HepG2 (cell line): ENCODE measurements at regions of chr1 and their contacts with region 1.

Region 1: GRCh38 chr1:171485375-171486047 is at the start of gene PRRC2C:
- DNase-seq: peak; percentile 95
- ATAC-seq: peak; percentile 97
- H3K4me3 ChIP-seq: peak within 1 kb of the TSS; percentile 80 to 97 (median 96)
- H3K27ac ChIP-seq: peak within 1 kb of the TSS; percentile 96
- H3K4me1 ChIP-seq: peaks cover 36% of the 10 kb centered on the region
- H3K27me3 ChIP-seq: no peaks in the 10 kb centered on the region; a peak in 1 of 5 replicates
- CTCF ChIP-seq: peak; percentile 92
- EP300 ChIP-seq: peak in 1 of 2 experiments; percentile 26; a peak in 1 of 4 replicates
- POLR2A ChIP-seq: peak; percentile 73 to 77
- RAD21 ChIP-seq: peak; percentile 59
- total RNA-seq, gene PRRC2C: 46.2 and 124 TPM in 2 replicates

Region 2: GRCh38 chr1:169893494-169894362 is 1591.8 kb before region 1 on chr1 and contains the start of gene SCYL3:
- CTCF ChIA-PET with region 1: no interaction called
- POLR2A ChIA-PET with region 1: no interaction called
- in situ Hi-C with region 1: no loop called
- intact Hi-C with region 1: loop called (anchors 10 kb)
- DNase-seq: peak; percentile 96
- ATAC-seq: peak; percentile 96
- H3K4me3 ChIP-seq: peak within 1 kb of the TSS; percentile 81 to 90 (median 87)
- H3K27ac ChIP-seq: peak within 1 kb of the TSS; percentile 99
- H3K4me1 ChIP-seq: peaks cover 36% of the 10 kb centered on the region
- H3K27me3 ChIP-seq: peaks cover 0 to 4% of the 10 kb centered on the region in 2 experiments; a peak in 1 of 5 replicates
- CTCF ChIP-seq: no peak; the same call in 1 of the 2 replicates
- EP300 ChIP-seq: 0 out of 4 replicates have a peak, but pooled peaks of 1 of the 2 experiments have one; percentile 13
- POLR2A ChIP-seq: peak; percentile 82 to 83
- RAD21 ChIP-seq: no peak; the same call in 1 of the 2 replicates
- total RNA-seq, gene SCYL3: 4.9 and 6.3 TPM in 2 replicates

Region 3: GRCh38 chr1:171570295-171570694 is 84.8 kb after region 1 on chr1:
- CTCF ChIA-PET with region 1: no interaction called
- POLR2A ChIA-PET with region 1: no interaction called
- in situ Hi-C with region 1: no loop called
- intact Hi-C with region 1: loop called (anchors 5 kb)
- DNase-seq: no peak
- ATAC-seq: no peak
- H3K4me3 ChIP-seq: no peak overlapping the region
- H3K27ac ChIP-seq: no peak overlapping the region
- H3K4me1 ChIP-seq: no peaks in the 10 kb centered on the region
- H3K27me3 ChIP-seq: no peaks in the 10 kb centered on the region
- CTCF ChIP-seq: no peak
- EP300 ChIP-seq: no peak
- POLR2A ChIP-seq: no peak
- RAD21 ChIP-seq: no peak

Region 4: GRCh38 chr1:171741872-171742576 is 256.5 kb after region 1 on chr1 and contains the start of gene VAMP4:
- CTCF ChIA-PET with region 1: no interaction called
- POLR2A ChIA-PET with region 1: interaction called, 3 read pairs
- in situ Hi-C with region 1: no loop called
- intact Hi-C with region 1: loop called (anchors 2 kb)
- DNase-seq: peak; percentile 54
- ATAC-seq: peak; percentile 92
- H3K4me3 ChIP-seq: peak within 1 kb of the TSS; percentile 78 to 88 (median 86)
- H3K27ac ChIP-seq: peak within 1 kb of the TSS; percentile 72
- H3K4me1 ChIP-seq: peaks cover 23% of the 10 kb centered on the region
- H3K27me3 ChIP-seq: no peaks in the 10 kb centered on the region
- CTCF ChIP-seq: no peak
- EP300 ChIP-seq: peak in 1 of 2 experiments; percentile 28; a peak in 1 of 4 replicates
- POLR2A ChIP-seq: peak; percentile 75 to 78
- RAD21 ChIP-seq: no peak
- total RNA-seq, gene VAMP4: 1.4 and 1.6 TPM in 2 replicates

Region 5: DNA sequence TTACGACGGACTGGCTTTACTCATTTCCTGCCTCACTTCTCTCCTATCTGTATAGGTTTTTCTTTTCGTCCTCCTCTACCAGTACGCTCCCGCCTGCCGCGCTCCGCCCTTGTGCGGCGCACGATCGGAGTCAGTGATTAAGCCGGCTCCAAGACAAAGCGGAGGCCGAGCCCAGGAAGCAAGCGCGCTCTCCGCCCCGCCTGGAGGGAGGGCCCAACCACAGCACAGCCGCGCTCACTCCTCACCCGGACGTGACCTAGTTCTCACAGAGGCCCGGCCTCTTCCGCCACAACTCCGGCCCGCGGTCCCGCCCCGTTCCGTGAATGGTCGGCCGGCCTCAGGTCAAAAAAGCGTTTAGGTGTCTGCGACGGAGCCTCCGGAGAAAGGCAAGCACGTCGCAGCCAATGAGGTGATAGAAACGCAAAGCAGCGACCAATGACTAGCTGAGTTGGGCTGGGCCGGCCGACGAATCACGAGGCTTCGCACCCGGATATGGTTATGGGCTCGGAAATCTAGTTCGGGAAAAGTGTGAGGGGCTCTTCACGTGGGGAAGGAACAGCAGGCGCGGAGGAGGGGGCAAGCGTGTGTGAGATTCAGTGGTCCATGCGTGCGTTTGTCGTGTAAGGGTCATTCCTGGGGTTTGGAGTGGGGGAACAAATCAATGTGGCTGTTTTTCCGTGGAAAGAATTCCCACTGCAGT is 295.8 kb after region 1 on chr1 and contains the start of gene METTL13:
- CTCF ChIA-PET with region 1: no interaction called
- POLR2A ChIA-PET with region 1: interaction called, 7 read pairs
- in situ Hi-C with region 1: no loop called
- intact Hi-C with region 1: loop called (anchors 5 kb)
- DNase-seq: peak; percentile 97
- ATAC-seq: peak; percentile 99
- H3K4me3 ChIP-seq: peak within 1 kb of the TSS; percentile 82 to 83 (median 82)
- H3K27ac ChIP-seq: peak within 1 kb of the TSS; percentile 85
- H3K4me1 ChIP-seq: peaks cover 35% of the 10 kb centered on the region
- H3K27me3 ChIP-seq: no peaks in the 10 kb centered on the region; a peak in 1 of 5 replicates
- CTCF ChIP-seq: peak; percentile 24; the same call in 1 of the 2 replicates
- EP300 ChIP-seq: no peak
- POLR2A ChIP-seq: peak; percentile 67 to 73
- RAD21 ChIP-seq: no peak
- total RNA-seq, gene METTL13: 22.8 and 28.3 TPM in 2 replicates

Region 6: GRCh38 chr1:172360511-172360910 is 875.0 kb after region 1 on chr1:
- CTCF ChIA-PET with region 1: no interaction called
- POLR2A ChIA-PET with region 1: no interaction called
- in situ Hi-C with region 1: no loop called
- intact Hi-C with region 1: loop called (anchors 5 kb)
- DNase-seq: peak; percentile 93
- ATAC-seq: peak; percentile 99
- H3K4me3 ChIP-seq: no peak overlapping the region
- H3K27ac ChIP-seq: no peak overlapping the region
- H3K4me1 ChIP-seq: peaks cover 34% of the 10 kb centered on the region
- H3K27me3 ChIP-seq: 0 out of 5 replicates have a peak, but pooled peaks cover 0 to 2% of the 10 kb centered on the region in 2 experiments
- CTCF ChIP-seq: no peak
- EP300 ChIP-seq: peak; percentile 80 to 86
- POLR2A ChIP-seq: no peak
- RAD21 ChIP-seq: no peak